ENCODE measurements at regions of chr16 and their contacts with region 1.

Region 1: DNA sequence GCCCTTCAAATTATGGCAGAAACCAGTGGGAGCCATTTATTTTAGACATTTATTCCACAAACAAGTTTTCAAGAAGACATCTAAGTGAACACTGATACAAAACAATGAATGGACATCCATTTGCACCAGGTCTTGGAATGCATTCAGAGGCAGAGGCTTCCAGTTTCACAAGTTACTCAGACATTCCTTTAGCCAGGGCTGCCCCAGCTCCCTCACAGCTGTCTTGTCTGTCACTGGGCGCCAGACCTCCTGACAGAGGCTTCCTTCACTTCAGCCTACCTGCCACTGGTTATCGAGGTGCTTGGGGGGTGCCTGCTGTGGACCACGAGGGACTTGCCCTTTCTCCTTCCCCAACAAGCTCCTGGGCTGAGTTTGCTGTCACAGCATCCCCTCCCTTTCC is 19.2 kb downstream of the AQP8 start:
- DNase-seq: no peak
- CTCF ChIP-seq: no peak

Region 2: GRCh38 chr16:25216785-25217526 is 19.0 kb before region 1 on chr16 and contains the start of gene AQP8:
- CTCF ChIA-PET with region 1: interaction called, 88 read pairs
- POLR2A ChIA-PET with region 1: interaction called, 6 read pairs
- DNase-seq: no peak
- CTCF ChIP-seq: no peak

Region 3: DNA sequence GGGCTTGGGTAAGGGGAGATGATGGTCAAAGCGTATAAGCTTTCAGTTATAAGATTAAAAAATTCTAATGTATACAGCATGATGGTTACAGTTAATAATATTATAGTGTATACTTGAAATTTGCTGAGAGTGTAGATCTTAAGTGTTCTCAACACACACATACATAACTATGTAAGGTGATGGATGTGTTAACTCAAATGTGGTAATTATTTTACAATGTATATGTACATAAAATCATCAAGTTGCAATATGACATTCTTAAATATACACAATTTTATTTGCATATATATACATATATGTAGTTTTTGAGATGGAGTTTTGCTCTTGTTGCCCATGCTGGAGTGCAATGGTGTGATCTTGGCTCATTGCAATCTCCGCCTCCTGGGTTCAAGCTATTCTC is 14.5 kb after region 1 on chr16:
- CTCF ChIA-PET with region 1: interaction called, 10 read pairs
- POLR2A ChIA-PET with region 1: no interaction called
- DNase-seq: no peak
- CTCF ChIP-seq: no peak